Heart left ventricle (tissue), 16 donors: ENCODE measurements at regions of chr6 and their contacts with region 1.

Region 1: GRCh38 chr6:624979-625378 is 31.9 kb downstream of the HUS1B start:
- DNase-seq: no peak
- ATAC-seq: peak; percentile 68 to 88 (median 76)
- H3K4me3 ChIP-seq: no peak overlapping the region
- H3K27ac ChIP-seq: peak overlapping the region in 1 of 12 donors; percentile 26
- H3K4me1 ChIP-seq: no peaks in the 10 kb centered on the region
- H3K27me3 ChIP-seq: no peaks in the 10 kb centered on the region
- CTCF ChIP-seq: peak in 7 of 12 donors; percentile 21 to 47 (median 35)
- POLR2A ChIP-seq: no peak

Region 2: DNA sequence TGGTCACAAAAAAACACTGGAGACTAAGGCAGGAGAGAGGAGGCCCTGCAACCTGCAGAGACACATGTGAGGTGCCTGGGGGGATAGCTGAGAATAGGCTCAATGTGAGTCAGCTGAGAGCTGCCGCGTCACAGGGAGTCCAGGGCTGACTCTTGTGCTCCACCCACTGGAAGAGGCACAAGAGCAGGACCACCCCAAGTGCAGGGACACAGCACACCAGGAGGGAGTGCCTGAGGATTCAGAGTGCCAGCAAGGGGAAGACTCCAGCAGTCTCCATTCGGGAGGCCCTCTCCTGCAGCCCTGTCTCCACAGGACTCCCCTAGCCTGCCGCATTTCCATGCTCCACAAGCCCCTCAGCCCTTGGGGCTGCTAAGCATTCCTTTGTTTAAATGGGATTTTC is 73.6 kb before region 1 on chr6:
- intact Hi-C with region 1: no loop called
- DNase-seq: no peak
- ATAC-seq: peak in 3 of 4 donors; percentile 53 to 62 (median 61)
- H3K4me3 ChIP-seq: no peak overlapping the region
- H3K27ac ChIP-seq: no peak overlapping the region
- H3K4me1 ChIP-seq: no peaks in the 10 kb centered on the region
- H3K27me3 ChIP-seq: no peaks in the 10 kb centered on the region
- CTCF ChIP-seq: peak in 5 of 12 donors; percentile 8 to 21 (median 13)
- POLR2A ChIP-seq: no peak

Region 3: GRCh38 chr6:692855-693722 is 68.1 kb after region 1 on chr6 and contains the start of gene EXOC2:
- intact Hi-C with region 1: loop called in 1 of 10 experiments (anchors 5 kb)
- DNase-seq: peak; percentile 84 to 94 (median 91)
- ATAC-seq: peak; percentile 85 to 98 (median 96)
- H3K4me3 ChIP-seq: peak within 1 kb of the TSS; percentile 61 to 100 (median 86)
- H3K27ac ChIP-seq: peak within 1 kb of the TSS in 11 of 12 donors; percentile 64 to 91 (median 80)
- H3K4me1 ChIP-seq: peaks cover 0 to 22% (median 15%) of the 10 kb centered on the region in 12 donors
- H3K27me3 ChIP-seq: no peaks in the 10 kb centered on the region
- CTCF ChIP-seq: no peak
- POLR2A ChIP-seq: peak in 1 of 2 donors; percentile 63
- total RNA-seq, gene EXOC2: 9.8 to 23.0 (median 15.6) TPM

Region 4: DNA sequence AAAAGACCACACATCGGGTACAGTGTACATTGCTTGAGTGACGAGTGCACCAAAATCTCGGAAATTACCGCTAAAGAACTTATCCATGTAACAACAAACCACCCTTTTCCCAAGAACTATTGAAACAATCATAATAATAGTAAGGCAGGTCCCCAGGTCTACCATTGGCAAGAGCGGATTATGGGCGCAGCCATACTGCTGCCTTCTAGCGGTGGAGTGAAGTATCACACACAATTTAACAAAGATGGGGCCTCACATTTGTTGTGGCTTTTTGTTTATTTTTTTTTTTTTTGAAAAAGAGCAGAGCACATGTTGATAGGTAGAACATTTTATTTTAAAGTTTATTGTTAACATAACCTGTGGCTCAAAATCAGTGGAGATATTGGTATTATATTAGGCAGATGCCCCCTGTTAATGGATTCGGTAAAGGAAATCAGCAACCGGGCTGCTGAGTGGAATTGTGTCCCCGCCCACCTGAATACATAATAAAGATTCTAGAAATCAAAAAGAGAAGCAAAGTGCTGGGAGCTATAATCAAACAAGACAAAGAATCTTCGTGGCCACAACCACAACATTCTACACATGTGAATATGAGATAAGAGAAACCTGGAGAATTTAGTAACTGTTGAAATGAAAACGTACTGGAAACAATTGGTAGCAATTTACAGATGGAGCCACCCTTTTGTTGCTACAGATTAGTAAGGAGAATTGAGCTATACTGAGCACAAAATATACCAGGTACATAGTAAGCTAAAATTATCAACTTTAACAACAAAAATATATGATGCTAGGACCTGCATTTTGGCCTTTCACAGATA is 162.2 kb after region 1 on chr6:
- intact Hi-C with region 1: loop called in 1 of 10 experiments (anchors 10 kb)
- DNase-seq: no peak
- ATAC-seq: no peak
- H3K4me3 ChIP-seq: no peak overlapping the region
- H3K27ac ChIP-seq: no peak overlapping the region
- H3K4me1 ChIP-seq: no peaks in the 10 kb centered on the region
- H3K27me3 ChIP-seq: peaks cover 0 to 43% (median 4%) of the 10 kb centered on the region in 9 donors
- CTCF ChIP-seq: peak; percentile 29 to 64 (median 56)
- POLR2A ChIP-seq: no peak